ENCODE measurements at regions of chrX and their contacts with region 1.

Region 1: GRCh38 chrX:154397819-154398724 is at the start of gene RPL10:
- DNase-seq: peak; percentile 93
- H3K4me3 Mint-ChIP-seq: peak within 1 kb of the TSS; percentile 92
- H3K27ac Mint-ChIP-seq: peak within 1 kb of the TSS; percentile 97
- H3K4me1 Mint-ChIP-seq: peaks cover 5% of the 10 kb centered on the region
- H3K27me3 Mint-ChIP-seq: no peaks in the 10 kb centered on the region
- CTCF ChIP-seq: no peak
- total RNA-seq, gene RPL10: 3,490 and 3,785 TPM in 2 replicates

Region 2: DNA sequence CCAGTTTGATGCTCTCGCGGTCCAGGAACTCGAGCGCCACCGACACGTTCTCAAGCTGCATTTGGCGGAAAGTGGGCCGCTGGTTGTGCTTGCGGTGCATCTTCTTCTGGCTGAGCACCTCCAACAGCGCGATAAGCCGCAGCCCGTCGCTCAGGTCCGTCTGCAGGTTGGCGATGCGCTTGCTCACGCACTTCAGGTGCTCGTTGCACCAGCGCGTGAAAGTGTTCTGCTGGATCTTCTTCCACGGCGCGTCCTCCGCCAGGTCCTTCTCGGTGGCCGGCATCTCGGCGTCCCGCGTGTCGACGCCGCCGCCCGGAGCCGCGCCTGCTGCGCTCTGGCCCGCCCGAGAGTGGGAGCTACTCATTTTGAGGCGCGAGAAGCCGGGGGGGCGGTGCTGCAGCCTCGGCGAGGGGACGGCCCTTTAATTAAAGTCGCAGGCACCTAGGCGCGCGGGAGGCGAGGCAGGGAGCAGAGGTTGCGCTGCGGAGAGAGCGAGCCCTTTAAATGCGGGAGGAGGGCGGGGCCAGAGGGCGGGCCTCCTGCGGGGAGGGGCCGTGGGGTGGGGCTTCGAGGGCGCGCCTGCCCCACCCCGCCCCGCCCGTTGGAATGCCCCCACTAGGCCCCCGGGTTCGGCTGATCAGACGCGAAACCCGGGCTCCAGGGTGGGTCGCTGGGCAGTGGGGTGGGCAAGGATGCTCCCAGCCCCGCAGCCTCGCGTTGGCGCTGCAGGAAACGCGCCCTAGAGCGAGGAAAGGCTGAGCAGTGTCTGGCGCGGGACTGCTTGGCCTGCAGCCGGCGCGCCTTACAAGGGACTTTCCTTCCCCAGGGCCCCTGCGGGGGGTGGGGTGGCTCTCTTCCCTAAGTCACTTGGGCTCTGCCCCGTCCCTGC is 26.9 kb before region 1 on chrX:
- CTCF ChIA-PET with region 1: interaction called, 21 read pairs
- POLR2A ChIA-PET with region 1: interaction called, 57 read pairs
- intact Hi-C with region 1: no loop called
- DNase-seq: peak; percentile 93
- H3K4me3 Mint-ChIP-seq: peak overlapping the region; percentile 75
- H3K27ac Mint-ChIP-seq: peak overlapping the region; percentile 54
- H3K4me1 Mint-ChIP-seq: peaks cover 8% of the 10 kb centered on the region
- H3K27me3 Mint-ChIP-seq: no peaks in the 10 kb centered on the region
- CTCF ChIP-seq: no peak

Region 3: GRCh38 chrX:154411322-154411980 is 13.4 kb after region 1 on chrX and contains the start of gene TAFAZZIN:
- CTCF ChIA-PET with region 1: interaction called, 4 read pairs
- POLR2A ChIA-PET with region 1: interaction called, 100 read pairs
- intact Hi-C with region 1: no loop called
- DNase-seq: peak; percentile 55
- H3K4me3 Mint-ChIP-seq: peak within 1 kb of the TSS; percentile 83
- H3K27ac Mint-ChIP-seq: peak within 1 kb of the TSS; percentile 59
- H3K4me1 Mint-ChIP-seq: peaks cover 14% of the 10 kb centered on the region
- H3K27me3 Mint-ChIP-seq: peaks cover 19% of the 10 kb centered on the region
- CTCF ChIP-seq: no peak
- total RNA-seq, gene TAFAZZIN: 48.0 and 59.1 TPM in 2 replicates

Region 4: GRCh38 chrX:154490414-154491083 is 92.5 kb after region 1 on chrX and contains the start of gene SLC10A3:
- CTCF ChIA-PET with region 1: no interaction called
- POLR2A ChIA-PET with region 1: interaction called, 23 read pairs
- intact Hi-C with region 1: no loop called
- DNase-seq: peak; percentile 85
- H3K4me3 Mint-ChIP-seq: peak within 1 kb of the TSS; percentile 76
- H3K27ac Mint-ChIP-seq: peak within 1 kb of the TSS; percentile 83
- H3K4me1 Mint-ChIP-seq: no peaks in the 10 kb centered on the region
- H3K27me3 Mint-ChIP-seq: peaks cover 11% of the 10 kb centered on the region
- CTCF ChIP-seq: no peak
- total RNA-seq, gene SLC10A3: 17.9 and 21.2 TPM in 2 replicates

Region 5: DNA sequence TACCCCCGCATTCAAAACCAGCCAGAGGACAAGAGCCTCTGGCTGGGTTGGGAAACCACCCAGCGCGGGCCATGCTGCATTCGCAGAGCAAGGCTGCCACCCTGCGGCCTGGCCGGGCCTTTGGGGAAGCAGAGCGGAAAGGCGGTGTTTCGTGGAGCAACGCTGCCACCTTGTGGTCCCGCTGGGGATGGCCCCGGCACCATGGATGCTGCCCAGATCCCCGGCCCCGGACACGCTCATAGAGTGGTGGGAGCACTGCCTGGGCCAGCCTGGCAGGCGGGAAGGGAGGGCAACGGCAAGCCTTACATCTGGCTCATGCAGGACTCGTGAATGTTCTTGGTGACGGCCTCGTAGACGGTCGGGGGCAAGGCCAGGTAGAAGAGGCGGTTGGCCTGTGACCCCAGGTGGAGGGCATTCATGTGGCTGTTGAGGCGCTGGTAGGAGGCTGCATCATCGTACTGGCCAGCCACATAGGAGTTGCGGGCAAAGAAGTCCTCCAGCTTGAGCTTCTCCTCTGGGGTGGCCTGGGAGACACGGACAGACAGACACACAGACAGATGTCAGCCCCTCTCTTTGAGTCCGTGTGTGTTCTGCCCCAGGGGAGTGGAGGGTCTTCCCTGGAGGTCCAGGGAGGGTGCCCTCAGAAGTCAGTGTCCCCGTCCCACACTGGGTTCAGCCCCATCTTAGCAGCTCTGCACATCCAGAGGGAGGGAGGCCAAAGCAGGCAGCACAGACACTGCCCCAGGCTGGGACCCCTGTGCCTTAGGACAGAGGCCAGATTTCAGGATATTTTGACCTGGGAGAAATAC is 137.0 kb after region 1 on chrX:
- CTCF ChIA-PET with region 1: interaction called, 4 read pairs
- POLR2A ChIA-PET with region 1: interaction called, 8 read pairs
- intact Hi-C with region 1: loop called (anchors 5 kb)
- DNase-seq: peak; percentile 86
- H3K4me3 Mint-ChIP-seq: no peak overlapping the region
- H3K27ac Mint-ChIP-seq: peak overlapping the region; percentile 35
- H3K4me1 Mint-ChIP-seq: no peaks in the 10 kb centered on the region
- H3K27me3 Mint-ChIP-seq: no peaks in the 10 kb centered on the region
- CTCF ChIP-seq: peak; percentile 100

Region 6: DNA sequence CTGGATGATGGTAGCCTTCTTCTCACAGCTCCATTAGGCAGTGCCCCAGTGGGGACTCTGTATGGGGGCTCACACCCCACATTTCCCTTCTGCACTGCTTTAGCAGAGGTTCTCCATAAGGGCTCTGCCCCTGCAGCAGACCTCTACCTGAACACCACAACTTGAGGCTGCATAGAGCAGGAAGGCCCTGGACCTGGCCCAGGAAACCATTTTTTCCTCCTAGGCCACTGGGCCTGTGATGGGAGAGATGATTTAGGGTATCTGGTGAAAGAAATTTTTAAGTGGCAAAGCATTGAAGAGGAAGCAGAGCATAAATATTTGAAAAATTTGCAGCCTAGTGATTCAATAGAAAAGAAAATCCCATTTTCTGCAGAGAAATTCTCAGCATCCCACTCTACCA is 1043.0 kb after region 1 on chrX:
- CTCF ChIA-PET with region 1: no interaction called
- POLR2A ChIA-PET with region 1: no interaction called
- intact Hi-C with region 1: no loop called
- DNase-seq: no peak
- H3K4me3 Mint-ChIP-seq: no peak overlapping the region
- H3K27ac Mint-ChIP-seq: no peak overlapping the region
- H3K4me1 Mint-ChIP-seq: no peaks in the 10 kb centered on the region
- H3K27me3 Mint-ChIP-seq: no peaks in the 10 kb centered on the region
- CTCF ChIP-seq: no peak